ENCODE measurements at regions of chr14 and their contacts with region 1.

Region 1: DNA sequence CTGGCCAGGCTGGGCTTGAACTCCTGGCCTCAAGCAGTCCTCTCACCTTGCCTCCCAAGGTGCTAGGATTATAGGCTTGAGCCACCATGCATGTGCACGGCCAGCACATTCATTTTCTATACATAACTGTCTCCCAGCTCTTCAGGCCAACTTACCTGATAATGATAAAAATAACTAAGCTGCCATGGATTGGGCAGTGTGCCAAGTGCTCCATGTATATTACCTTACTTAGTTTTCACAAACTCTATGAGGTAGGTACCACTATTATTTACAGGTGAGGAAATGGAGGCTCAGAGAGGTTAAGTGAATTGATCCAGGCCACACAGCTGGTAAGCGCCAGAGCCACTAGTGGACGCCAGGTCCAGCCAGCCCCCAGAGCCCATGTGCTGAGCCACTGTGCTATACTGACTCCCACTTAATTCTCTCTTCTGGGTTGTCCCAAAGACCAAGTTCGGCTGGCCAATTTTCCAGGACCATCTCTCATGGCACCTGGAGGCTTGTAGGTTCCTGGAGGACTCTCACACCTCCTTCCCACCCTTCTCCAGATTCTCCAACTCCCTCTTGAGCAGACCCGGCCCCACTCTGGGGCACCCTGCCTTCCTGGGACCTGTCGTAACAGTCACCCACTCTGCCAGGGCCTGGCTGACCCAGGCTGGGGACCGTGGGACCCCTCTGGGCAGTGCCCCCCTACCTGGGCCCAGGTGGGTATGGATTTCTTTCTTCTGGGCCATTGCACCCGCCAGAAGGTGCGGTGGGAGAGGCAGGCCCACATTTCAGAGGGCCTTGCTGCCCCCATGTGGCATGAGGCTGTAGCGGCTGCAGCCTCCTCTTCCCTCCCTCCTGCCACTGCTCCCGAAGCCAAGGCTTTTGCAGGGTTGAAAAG is 30.2 kb upstream of the CIPC start:
- DNase-seq: peak; percentile 30
- H3K4me3 ChIP-seq: no peak overlapping the region
- H3K27ac ChIP-seq: no peak overlapping the region
- H3K27me3 ChIP-seq: no peaks in the 10 kb centered on the region
- CTCF ChIP-seq: peak; percentile 90

Region 2: GRCh38 chr14:76881348-76881747 is 186.5 kb before region 1 on chr14:
- CTCF ChIA-PET with region 1: interaction called, 524 read pairs
- POLR2A ChIA-PET with region 1: interaction called, 9 read pairs
- DNase-seq: no peak
- H3K4me3 ChIP-seq: no peak overlapping the region
- H3K27ac ChIP-seq: no peak overlapping the region
- H3K27me3 ChIP-seq: no peaks in the 10 kb centered on the region
- CTCF ChIP-seq: no peak

Region 3: DNA sequence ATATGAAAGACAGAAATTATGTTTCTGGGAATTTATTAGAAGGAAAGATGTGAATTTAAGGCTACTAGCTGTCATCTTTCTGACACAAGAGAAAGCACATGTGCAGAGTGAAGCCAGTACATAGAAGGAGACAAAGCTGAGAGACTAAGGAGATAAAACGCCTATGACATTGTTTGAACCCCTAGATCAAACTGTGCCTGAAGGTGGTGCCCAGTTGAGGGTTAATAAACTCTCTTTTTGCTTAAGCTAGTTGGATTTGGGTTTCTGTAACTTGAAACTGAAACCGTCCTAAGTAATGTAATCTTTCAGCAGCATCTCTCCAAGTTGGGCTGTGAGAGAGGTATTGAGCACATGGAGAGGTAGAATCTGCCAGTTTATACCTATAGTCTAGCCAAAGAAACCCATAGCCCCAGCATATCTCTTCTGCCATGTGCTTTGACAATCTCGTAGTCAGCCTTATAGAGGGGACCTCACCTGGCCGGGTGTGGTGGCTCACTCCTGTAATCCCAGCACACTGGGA is 157.4 kb before region 1 on chr14:
- CTCF ChIA-PET with region 1: interaction called, 195 read pairs
- POLR2A ChIA-PET with region 1: no interaction called
- DNase-seq: no peak
- H3K4me3 ChIP-seq: no peak overlapping the region
- H3K27ac ChIP-seq: no peak overlapping the region
- H3K27me3 ChIP-seq: no peaks in the 10 kb centered on the region
- CTCF ChIP-seq: no peak

Region 4: GRCh38 chr14:77053046-77053841 is 14.6 kb before region 1 on chr14:
- CTCF ChIA-PET with region 1: interaction called, 90 read pairs
- POLR2A ChIA-PET with region 1: no interaction called
- DNase-seq: no peak
- H3K4me3 ChIP-seq: no peak overlapping the region
- H3K27ac ChIP-seq: peak overlapping the region; percentile 21
- H3K27me3 ChIP-seq: no peaks in the 10 kb centered on the region
- CTCF ChIP-seq: peak; percentile 89

Region 5: GRCh38 chr14:77097700-77098528 is 30.0 kb after region 1 on chr14 and contains the start of gene CIPC:
- CTCF ChIA-PET with region 1: interaction called, 98 read pairs
- POLR2A ChIA-PET with region 1: no interaction called
- DNase-seq: peak; percentile 96
- H3K4me3 ChIP-seq: peak within 1 kb of the TSS; percentile 99
- H3K27ac ChIP-seq: peak within 1 kb of the TSS; percentile 73
- H3K27me3 ChIP-seq: no peaks in the 10 kb centered on the region
- CTCF ChIP-seq: no peak
- polyA plus RNA-seq, gene CIPC: 8.9 and 9.9 TPM in 2 replicates

Measured in AG04450 (cell line).